ENCODE measurements at regions of chr16 and their contacts with region 1.

Region 1: DNA sequence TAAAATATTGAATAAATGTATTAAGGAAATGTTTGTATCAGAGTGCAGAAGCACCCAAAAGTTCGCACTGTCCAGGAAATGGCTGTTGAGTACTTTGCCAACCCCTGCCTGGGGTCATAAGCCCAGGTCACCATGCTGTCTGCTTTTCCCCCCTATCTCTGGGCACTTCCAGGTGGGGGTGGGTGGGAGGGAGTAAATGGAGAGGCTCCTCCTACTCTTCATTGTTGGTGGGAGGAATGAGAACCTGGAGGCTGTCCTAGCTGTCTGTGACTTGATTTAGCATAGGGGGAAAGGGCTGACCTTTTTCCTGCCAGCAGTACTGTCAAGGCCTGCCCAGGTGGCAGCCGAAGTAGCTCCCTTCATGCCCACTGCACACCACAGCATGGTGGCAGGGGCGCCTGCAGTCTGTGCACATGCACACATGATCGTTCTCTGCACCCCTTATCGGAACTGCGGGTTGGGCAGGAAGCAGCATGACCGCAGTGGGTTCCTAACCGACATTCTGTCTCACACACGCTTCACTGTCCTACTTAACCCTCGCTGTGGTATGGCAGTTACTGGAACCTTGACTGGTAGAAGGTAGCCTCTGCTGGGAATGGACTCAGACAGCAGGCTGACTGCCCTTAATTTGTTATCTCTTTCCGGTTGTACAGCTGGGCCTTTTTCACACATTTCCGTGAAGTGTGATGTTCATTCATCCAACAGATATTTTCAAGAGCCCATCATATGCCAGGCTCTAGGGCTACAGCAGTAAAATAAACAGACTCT is 41.5 kb downstream of the LDHD start:
- DNase-seq: peak; percentile 95
- H3K4me3 Mint-ChIP-seq: peak overlapping the region; percentile 89
- H3K27ac Mint-ChIP-seq: peak overlapping the region; percentile 98
- H3K4me1 Mint-ChIP-seq: peaks cover 63% of the 10 kb centered on the region
- H3K27me3 Mint-ChIP-seq: no peaks in the 10 kb centered on the region

Region 2: GRCh38 chr16:75064403-75065148 is 10.5 kb before region 1 on chr16:
- intact Hi-C with region 1: loop called (anchors 1 kb)
- DNase-seq: peak; percentile 74
- H3K4me3 Mint-ChIP-seq: peak overlapping the region; percentile 69
- H3K27ac Mint-ChIP-seq: peak overlapping the region; percentile 85
- H3K4me1 Mint-ChIP-seq: peaks cover 50% of the 10 kb centered on the region
- H3K27me3 Mint-ChIP-seq: no peaks in the 10 kb centered on the region

Region 3: GRCh38 chr16:75099756-75100602 is 24.9 kb after region 1 on chr16:
- intact Hi-C with region 1: loop called (anchors 1 kb)
- DNase-seq: peak; percentile 86
- H3K4me3 Mint-ChIP-seq: peak overlapping the region; percentile 74
- H3K27ac Mint-ChIP-seq: peak overlapping the region; percentile 95
- H3K4me1 Mint-ChIP-seq: peaks cover 63% of the 10 kb centered on the region
- H3K27me3 Mint-ChIP-seq: no peaks in the 10 kb centered on the region

Measured in activated CD4-positive, alpha-beta T cell treated with anti-CD3 and anti-CD28 coated beads, Interleukin-2, amount 10 ng/mL, durations not matched to agents 24 days and 14 days (primary cell).